Activated CD8-positive, alpha-beta T cell treated with anti-CD3 and anti-CD28 coated beads, Interleukin-2, amount 10 ng/mL, durations not matched to agents 7 days and 5 days (primary cell): ENCODE measurements at regions of chr9 and their contacts with region 1.

Region 1: GRCh38 chr9:126301985-126302603 is 24.5 kb upstream of the MVB12B start:
- DNase-seq: peak; percentile 77
- ATAC-seq: peak; percentile 81
- H3K4me3 Mint-ChIP-seq: no peak overlapping the region
- H3K27ac Mint-ChIP-seq: no peak overlapping the region
- H3K4me1 Mint-ChIP-seq: peaks cover 14% of the 10 kb centered on the region
- H3K27me3 Mint-ChIP-seq: peaks cover 11% of the 10 kb centered on the region

Region 2: GRCh38 chr9:126317513-126317912 is 15.4 kb after region 1 on chr9:
- CTCF ChIA-PET with region 1: interaction called, 13 read pairs
- POLR2A ChIA-PET with region 1: no interaction called
- DNase-seq: peak; percentile 54
- ATAC-seq: peak; percentile 53
- H3K4me3 Mint-ChIP-seq: no peak overlapping the region
- H3K27ac Mint-ChIP-seq: no peak overlapping the region
- H3K4me1 Mint-ChIP-seq: peaks cover 26% of the 10 kb centered on the region
- H3K27me3 Mint-ChIP-seq: peaks cover 9% of the 10 kb centered on the region

Region 3: GRCh38 chr9:126471084-126471624 is 169.1 kb after region 1 on chr9:
- CTCF ChIA-PET with region 1: interaction called, 26 read pairs
- POLR2A ChIA-PET with region 1: no interaction called
- DNase-seq: peak; percentile 92
- ATAC-seq: peak; percentile 87
- H3K4me3 Mint-ChIP-seq: peak overlapping the region; percentile 55
- H3K27ac Mint-ChIP-seq: peak overlapping the region; percentile 93
- H3K4me1 Mint-ChIP-seq: peaks cover 76% of the 10 kb centered on the region
- H3K27me3 Mint-ChIP-seq: no peaks in the 10 kb centered on the region